HCT116 (cell line): ENCODE measurements at regions of chr20 and their contacts with region 1.

Region 1: DNA sequence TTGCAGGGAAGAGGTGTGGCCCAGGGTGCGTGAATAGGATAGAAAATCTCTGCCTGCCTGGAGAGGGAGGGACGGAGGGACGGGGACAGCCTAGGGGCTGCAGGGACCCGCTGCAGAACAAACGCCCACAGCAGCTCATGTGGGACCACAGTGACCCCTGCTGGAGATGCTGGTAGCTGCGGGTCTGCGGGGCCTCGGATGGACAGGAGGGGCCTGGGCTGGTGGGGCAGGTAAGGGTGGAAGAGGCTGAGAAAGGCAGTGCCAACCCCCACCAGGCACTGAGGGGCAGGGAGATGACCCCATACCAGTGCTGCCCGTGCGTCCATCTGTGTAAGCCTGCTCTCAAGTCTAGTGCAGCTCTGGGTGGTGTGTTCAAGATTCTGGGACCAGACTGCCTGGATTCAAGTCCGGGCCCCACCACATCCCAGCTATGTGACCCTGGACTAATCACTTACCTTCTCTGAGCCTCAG is 39.4 kb downstream of the KIAA1755 start:
- DNase-seq: peak; percentile 46
- ATAC-seq: peak; percentile 79
- H3K4me3 ChIP-seq: no peak overlapping the region
- H3K27ac ChIP-seq: no peak overlapping the region
- H3K4me1 ChIP-seq: peaks cover 8 to 34% of the 10 kb centered on the region in 2 experiments
- H3K27me3 ChIP-seq: no peaks in the 10 kb centered on the region
- CTCF ChIP-seq: peak; percentile 92 to 96 (median 96)
- POLR2A ChIP-seq: no peak
- RAD21 ChIP-seq: peak; percentile 95

Region 2: GRCh38 chr20:37564388-37565133 is 656.6 kb before region 1 on chr20:
- CTCF ChIA-PET with region 1: interaction called, 11 read pairs
- POLR2A ChIA-PET with region 1: no interaction called
- RAD21 ChIA-PET with region 1: interaction called in 1 of 2 experiments, 3 read pairs
- intact Hi-C with region 1: loop called (anchors 1 kb)
- DNase-seq: no peak
- ATAC-seq: peak; percentile 89
- H3K4me3 ChIP-seq: no peak overlapping the region
- H3K27ac ChIP-seq: no peak overlapping the region
- H3K4me1 ChIP-seq: peaks cover 4 to 9% of the 10 kb centered on the region in 2 experiments; a peak in 1 of 4 replicates
- H3K27me3 ChIP-seq: peaks cover 31% of the 10 kb centered on the region
- CTCF ChIP-seq: peak; percentile 82 to 94 (median 86)
- POLR2A ChIP-seq: no peak
- RAD21 ChIP-seq: peak; percentile 96

Region 3: GRCh38 chr20:38073307-38074071 is 147.7 kb before region 1 on chr20:
- CTCF ChIA-PET with region 1: interaction called, 37 read pairs
- POLR2A ChIA-PET with region 1: interaction called, 3 read pairs
- RAD21 ChIA-PET with region 1: interaction called, 8 to 9 read pairs
- intact Hi-C with region 1: loop called (anchors 5 kb)
- DNase-seq: peak; percentile 24
- ATAC-seq: peak; percentile 80
- H3K4me3 ChIP-seq: no peak overlapping the region
- H3K27ac ChIP-seq: no peak overlapping the region
- H3K4me1 ChIP-seq: no peaks in the 10 kb centered on the region
- H3K27me3 ChIP-seq: no peaks in the 10 kb centered on the region
- CTCF ChIP-seq: peak; percentile 57 to 78 (median 69); a peak in 5 of 6 replicates
- POLR2A ChIP-seq: no peak
- RAD21 ChIP-seq: peak; percentile 51; the same call in 1 of the 2 replicates

Region 4: DNA sequence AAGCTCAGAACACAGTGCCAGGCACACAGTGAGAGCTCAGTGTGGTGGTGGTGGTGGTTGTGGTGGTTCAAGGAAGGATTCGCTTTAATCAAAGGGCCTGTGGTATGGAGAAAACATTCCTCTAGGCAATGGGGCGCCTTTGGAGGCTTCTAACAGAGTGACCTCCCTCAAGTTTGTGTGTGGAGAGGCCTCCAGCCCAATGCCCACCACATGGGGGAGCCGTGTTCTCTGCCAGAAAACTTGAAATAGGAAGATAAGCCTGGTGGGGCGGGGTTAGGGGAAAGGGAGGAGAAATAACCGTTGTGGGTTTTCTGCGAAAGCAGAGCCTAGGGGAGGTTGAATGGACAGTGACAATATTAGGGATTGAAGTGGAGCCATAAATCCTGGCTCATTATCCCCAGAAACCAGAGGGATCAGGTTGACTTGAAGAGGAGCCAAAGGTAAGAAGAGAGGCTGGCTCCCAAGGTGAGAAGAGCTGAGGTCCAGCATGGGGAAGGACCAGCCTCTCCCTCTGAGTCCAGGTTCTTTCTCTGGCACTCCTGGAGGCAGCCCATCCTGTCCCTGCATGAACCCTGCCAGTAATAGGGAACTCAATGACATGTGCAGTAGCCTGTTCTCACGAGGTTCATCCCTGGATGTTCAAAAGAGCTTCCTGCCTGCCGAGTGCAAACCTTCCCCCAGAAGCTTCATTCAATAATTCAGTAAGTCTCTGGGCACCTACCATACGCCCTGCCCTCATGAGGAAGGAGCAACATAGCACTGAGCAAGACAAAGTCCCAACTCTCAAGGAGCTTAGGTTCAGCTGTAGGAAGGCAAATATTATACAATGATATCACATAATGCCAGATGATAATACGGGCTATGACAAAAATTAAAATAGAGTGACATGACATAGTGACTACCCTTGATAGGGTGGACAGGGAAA is 107.5 kb before region 1 on chr20:
- CTCF ChIA-PET with region 1: interaction called, 27 read pairs
- POLR2A ChIA-PET with region 1: no interaction called
- RAD21 ChIA-PET with region 1: interaction called, 9 to 11 read pairs
- intact Hi-C with region 1: no loop called
- DNase-seq: peak; percentile 27
- ATAC-seq: peak; percentile 85
- H3K4me3 ChIP-seq: no peak overlapping the region
- H3K27ac ChIP-seq: no peak overlapping the region
- H3K4me1 ChIP-seq: peaks cover 7 to 44% of the 10 kb centered on the region in 2 experiments; a peak in 3 of 4 replicates
- H3K27me3 ChIP-seq: no peaks in the 10 kb centered on the region
- CTCF ChIP-seq: peak; percentile 48 to 67 (median 55)
- POLR2A ChIP-seq: no peak
- RAD21 ChIP-seq: peak; percentile 69

Region 5: GRCh38 chr20:38201356-38201755 is 19.8 kb before region 1 on chr20:
- CTCF ChIA-PET with region 1: interaction called, 15 read pairs
- POLR2A ChIA-PET with region 1: no interaction called
- RAD21 ChIA-PET with region 1: no interaction called
- intact Hi-C with region 1: no loop called
- DNase-seq: no peak
- ATAC-seq: peak; percentile 80
- H3K4me3 ChIP-seq: no peak overlapping the region
- H3K27ac ChIP-seq: no peak overlapping the region
- H3K4me1 ChIP-seq: peaks cover 0 to 13% of the 10 kb centered on the region in 2 experiments; a peak in 2 of 4 replicates
- H3K27me3 ChIP-seq: no peaks in the 10 kb centered on the region
- CTCF ChIP-seq: no peak
- POLR2A ChIP-seq: no peak
- RAD21 ChIP-seq: no peak

Region 6: DNA sequence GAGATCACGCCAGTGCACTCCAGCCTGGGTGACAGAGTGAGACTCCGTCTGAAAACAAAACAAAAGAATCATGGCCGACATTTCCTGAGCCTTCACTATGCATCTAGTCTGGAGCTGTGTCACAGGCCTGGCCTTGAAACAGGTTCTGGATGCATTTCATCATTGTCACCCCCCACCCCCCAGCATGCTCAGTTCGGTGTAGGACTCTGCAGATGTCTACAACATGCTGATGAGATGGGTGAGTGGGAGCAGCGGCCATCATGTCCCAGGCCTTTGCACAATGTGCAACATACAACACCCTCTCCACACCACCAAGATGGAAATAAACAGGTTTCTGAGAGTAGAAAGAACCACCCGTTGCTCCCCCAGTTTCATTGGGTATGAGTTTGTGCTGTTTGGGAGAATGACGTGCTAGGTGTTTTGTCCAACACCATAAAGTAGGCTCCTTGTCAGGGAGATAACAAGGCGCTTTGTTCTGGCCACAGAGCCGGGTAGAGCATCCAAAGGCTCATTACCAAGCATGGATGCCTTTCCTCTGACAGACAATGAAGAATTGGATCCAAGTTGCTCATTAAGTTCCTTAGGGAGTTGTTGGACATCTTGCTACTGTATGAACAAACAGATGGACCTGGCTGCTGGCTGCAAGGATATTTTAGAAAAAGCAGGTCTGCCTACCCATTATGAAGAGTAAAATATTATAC is 191.9 kb after region 1 on chr20:
- CTCF ChIA-PET with region 1: interaction called, 14 read pairs
- POLR2A ChIA-PET with region 1: no interaction called
- RAD21 ChIA-PET with region 1: no interaction called
- intact Hi-C with region 1: no loop called
- DNase-seq: no peak
- ATAC-seq: no peak
- H3K4me3 ChIP-seq: no peak overlapping the region
- H3K27ac ChIP-seq: no peak overlapping the region
- H3K4me1 ChIP-seq: no peaks in the 10 kb centered on the region; a peak in 1 of 4 replicates
- H3K27me3 ChIP-seq: no peaks in the 10 kb centered on the region
- CTCF ChIP-seq: no peak
- POLR2A ChIP-seq: no peak
- RAD21 ChIP-seq: no peak